ENCODE measurements at regions of chr11 and their contacts with region 1.

Region 1: GRCh38 chr11:9748361-9748970 is 84.6 kb downstream of the SWAP70 start:
- DNase-seq: peak; percentile 85
- H3K4me3 Mint-ChIP-seq: no peak overlapping the region
- H3K27ac Mint-ChIP-seq: peak overlapping the region; percentile 3
- H3K4me1 Mint-ChIP-seq: peaks cover 19% of the 10 kb centered on the region
- H3K27me3 Mint-ChIP-seq: no peaks in the 10 kb centered on the region

Region 2: DNA sequence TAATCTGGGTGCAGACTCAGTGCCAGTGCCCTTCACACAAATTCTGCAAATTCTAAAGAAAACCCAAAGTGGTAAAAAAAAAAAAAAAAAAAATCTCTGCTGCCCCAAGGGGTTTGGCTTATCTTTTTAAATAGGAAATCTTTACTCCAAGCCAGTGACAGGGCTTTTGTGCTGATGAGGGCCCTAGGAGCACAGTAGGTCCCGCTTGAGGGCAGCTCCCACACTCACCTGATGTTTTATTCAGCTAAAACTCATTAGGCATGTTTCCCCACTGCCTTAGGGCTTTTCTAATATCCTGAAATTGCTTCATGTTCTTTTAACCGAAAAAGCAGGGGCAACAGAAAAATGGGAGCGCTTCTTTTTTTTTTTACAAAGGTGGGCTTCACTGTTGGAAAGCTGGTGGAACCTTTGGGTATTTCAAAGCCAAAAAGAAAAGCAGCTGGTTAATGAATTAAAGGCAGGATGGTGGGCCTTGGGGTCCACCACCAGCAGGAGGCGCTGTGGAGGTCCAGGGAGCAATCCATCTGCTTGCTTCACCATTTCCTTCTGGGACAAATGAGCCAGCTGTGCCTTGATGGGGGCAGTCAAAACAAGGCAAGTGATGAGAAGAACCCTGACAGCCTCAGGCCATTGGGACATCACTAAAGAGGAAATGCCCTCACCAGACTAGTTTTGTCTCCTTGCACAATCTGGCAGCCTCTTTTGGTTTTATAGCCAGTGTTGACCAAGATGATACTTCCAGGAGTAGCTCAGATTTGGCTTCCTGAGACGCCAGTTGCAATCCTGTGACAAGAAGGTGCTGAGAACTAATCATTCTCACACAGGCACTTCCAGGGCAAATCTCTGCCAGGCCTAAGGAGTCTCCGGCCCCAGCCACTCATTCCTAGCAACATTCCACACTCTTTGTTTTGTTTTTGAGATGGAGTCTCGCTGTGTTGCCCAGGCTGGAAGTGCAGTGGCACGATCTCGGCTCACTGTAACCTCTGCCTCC is 213.4 kb before region 1 on chr11:
- CTCF ChIA-PET with region 1: interaction called, 10 read pairs
- POLR2A ChIA-PET with region 1: no interaction called
- DNase-seq: peak; percentile 76
- H3K4me3 Mint-ChIP-seq: no peak overlapping the region
- H3K27ac Mint-ChIP-seq: no peak overlapping the region
- H3K4me1 Mint-ChIP-seq: peaks cover 1% of the 10 kb centered on the region
- H3K27me3 Mint-ChIP-seq: no peaks in the 10 kb centered on the region

Region 3: DNA sequence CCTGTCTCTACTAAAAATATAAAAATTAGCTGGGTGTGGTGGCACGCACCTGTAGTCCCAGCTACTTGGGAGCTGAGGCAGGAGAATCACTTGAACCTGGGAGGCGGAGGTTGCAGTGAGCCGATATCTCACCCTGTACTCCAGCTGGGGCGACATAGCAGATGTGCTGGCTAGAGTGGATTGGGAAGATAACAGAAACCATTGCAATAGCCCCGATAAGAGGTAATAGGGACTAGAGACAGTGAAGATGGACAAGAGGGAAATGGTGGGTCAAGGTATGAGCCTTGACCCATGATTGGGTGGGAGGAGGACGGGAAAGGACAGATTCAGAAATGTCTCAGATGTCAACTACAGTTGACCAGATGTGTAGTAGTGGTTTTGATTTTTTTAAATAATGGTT is 78.5 kb before region 1 on chr11:
- CTCF ChIA-PET with region 1: no interaction called
- POLR2A ChIA-PET with region 1: no interaction called
- DNase-seq: no peak
- H3K4me3 Mint-ChIP-seq: no peak overlapping the region
- H3K27ac Mint-ChIP-seq: no peak overlapping the region
- H3K4me1 Mint-ChIP-seq: peaks cover 5% of the 10 kb centered on the region
- H3K27me3 Mint-ChIP-seq: peaks cover 10% of the 10 kb centered on the region

Region 4: GRCh38 chr11:9736365-9736764 is 12.1 kb before region 1 on chr11:
- CTCF ChIA-PET with region 1: interaction called, 12 read pairs
- POLR2A ChIA-PET with region 1: no interaction called
- DNase-seq: no peak
- H3K4me3 Mint-ChIP-seq: no peak overlapping the region
- H3K27ac Mint-ChIP-seq: no peak overlapping the region
- H3K4me1 Mint-ChIP-seq: peaks cover 24% of the 10 kb centered on the region
- H3K27me3 Mint-ChIP-seq: no peaks in the 10 kb centered on the region

Region 5: GRCh38 chr11:9774591-9775397 is 26.3 kb after region 1 on chr11:
- CTCF ChIA-PET with region 1: no interaction called
- POLR2A ChIA-PET with region 1: no interaction called
- DNase-seq: no peak
- H3K4me3 Mint-ChIP-seq: no peak overlapping the region
- H3K27ac Mint-ChIP-seq: no peak overlapping the region
- H3K4me1 Mint-ChIP-seq: no peaks in the 10 kb centered on the region
- H3K27me3 Mint-ChIP-seq: no peaks in the 10 kb centered on the region

Region 6: DNA sequence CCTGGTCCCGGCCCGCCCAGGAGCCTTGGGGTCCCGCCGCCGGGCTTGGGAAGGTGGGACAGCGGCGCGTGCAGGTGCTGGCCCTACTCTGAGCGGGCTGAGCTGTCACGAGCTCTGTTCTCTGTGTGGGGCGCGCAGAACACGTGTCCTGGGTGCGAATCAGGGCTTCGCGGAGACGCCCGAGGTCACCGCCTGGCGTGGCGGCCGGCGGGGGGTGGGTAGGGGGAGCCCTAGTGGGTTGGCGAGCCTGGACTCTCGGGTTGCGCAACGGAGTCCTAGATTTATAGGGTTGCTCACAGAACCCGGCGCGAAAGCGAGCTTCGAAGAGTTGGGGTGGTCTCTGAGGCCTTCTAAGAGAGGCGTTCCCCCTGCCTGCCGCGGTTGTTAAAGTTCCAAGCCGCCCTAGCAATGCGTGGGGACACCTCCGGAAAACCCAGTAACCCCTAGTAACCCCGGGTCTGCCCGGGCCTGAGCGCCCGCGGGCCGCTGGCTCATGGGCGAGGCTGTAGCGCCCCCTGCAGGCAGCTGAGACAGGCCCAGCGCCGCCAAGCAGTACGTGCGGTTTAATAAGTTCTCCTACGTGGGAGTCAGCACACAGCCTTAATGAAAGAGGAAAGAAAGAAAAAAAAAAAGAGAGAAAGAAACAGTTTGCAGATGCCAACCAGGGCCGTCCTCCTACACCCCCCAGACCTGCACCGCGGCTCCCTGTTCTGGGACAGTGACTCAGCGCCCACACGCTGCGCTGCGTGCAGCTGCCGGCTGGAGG is 559.2 kb after region 1 on chr11:
- CTCF ChIA-PET with region 1: interaction called, 10 read pairs
- POLR2A ChIA-PET with region 1: no interaction called
- DNase-seq: peak; percentile 75
- H3K4me3 Mint-ChIP-seq: peak overlapping the region; percentile 74
- H3K27ac Mint-ChIP-seq: peak overlapping the region; percentile 50
- H3K4me1 Mint-ChIP-seq: peaks cover 56% of the 10 kb centered on the region
- H3K27me3 Mint-ChIP-seq: peaks cover 82% of the 10 kb centered on the region

Measured in activated CD4-positive, alpha-beta T cell treated with anti-CD3 and anti-CD28 coated beads, Interleukin-2, amount 10 ng/mL, durations not matched to agents 7 days and 5 days (primary cell).